ENCODE measurements at regions of chr2 and their contacts with region 1.

Region 1: GRCh38 chr2:144510294-144510991 is 9.5 kb downstream of the ZEB2 start:
- DNase-seq: peak in 1 of 2 donors; percentile 55
- ATAC-seq: peak; percentile 32 to 89 (median 74)
- H3K4me3 ChIP-seq: peak overlapping the region in 9 of 10 donors; percentile 25 to 85 (median 79)
- H3K27ac ChIP-seq: peak overlapping the region; percentile 96 to 100 (median 98)
- H3K4me1 ChIP-seq: peaks cover 0 to 95% (median 73%) of the 10 kb centered on the region in 9 donors
- H3K27me3 ChIP-seq: peaks cover 0 to 3% (median 0%) of the 10 kb centered on the region in 7 donors
- CTCF ChIP-seq: no peak

Region 2: GRCh38 chr2:143779021-143779420 is 731.4 kb before region 1 on chr2:
- intact Hi-C with region 1: no loop called
- DNase-seq: no peak
- ATAC-seq: no peak
- H3K4me3 ChIP-seq: no peak overlapping the region
- H3K27ac ChIP-seq: no peak overlapping the region
- H3K4me1 ChIP-seq: no peaks in the 10 kb centered on the region
- H3K27me3 ChIP-seq: no peaks in the 10 kb centered on the region
- CTCF ChIP-seq: no peak

Region 3: DNA sequence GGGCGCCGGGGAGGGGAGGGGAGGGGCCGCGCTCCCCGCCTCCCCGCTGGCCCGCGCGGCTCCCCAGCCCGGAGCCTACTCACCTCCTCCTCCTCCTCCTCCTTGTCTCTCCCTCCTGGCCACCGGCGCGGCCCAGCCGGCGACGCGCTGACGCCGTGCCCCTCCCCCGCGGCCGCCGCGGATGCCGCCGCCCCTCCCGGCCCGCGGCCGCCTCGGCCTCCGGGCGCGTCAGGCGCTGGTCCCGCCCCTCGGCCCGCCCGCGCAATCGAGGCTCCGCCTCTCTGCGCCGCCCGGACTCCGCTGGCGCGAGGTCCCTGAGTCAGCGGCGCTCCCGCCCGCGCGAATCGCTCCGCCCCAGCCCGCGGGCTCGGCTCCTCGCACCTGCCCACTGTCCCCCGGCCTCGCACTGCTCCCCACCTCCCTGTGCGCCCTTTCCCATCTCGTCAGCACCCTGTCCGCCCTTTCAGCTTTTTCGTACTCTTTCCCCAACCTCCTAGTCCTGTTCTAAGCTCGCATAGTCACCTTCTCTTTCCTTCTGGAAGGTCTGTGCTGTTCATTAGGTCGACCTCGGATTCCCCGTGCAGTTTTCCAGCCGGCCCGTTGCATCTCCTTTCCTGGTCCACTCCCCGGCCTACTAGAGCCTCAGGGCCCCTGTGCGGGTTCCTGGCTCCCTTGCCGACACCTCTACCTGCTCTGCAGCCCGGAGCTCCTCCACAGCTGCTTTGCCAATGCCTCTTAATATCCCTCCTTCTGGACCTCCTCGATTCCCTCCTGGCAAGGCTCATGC is 177.9 kb before region 1 on chr2:
- intact Hi-C with region 1: loop called in 6 of 10 experiments (anchors 5 kb)
- DNase-seq: peak; percentile 80 to 90
- ATAC-seq: peak; percentile 94 to 98 (median 95)
- H3K4me3 ChIP-seq: peak overlapping the region in 9 of 10 donors; percentile 58 to 97 (median 89)
- H3K27ac ChIP-seq: peak overlapping the region; percentile 78 to 96 (median 92)
- H3K4me1 ChIP-seq: peaks cover 0 to 22% (median 16%) of the 10 kb centered on the region in 9 donors
- H3K27me3 ChIP-seq: no peaks in the 10 kb centered on the region
- CTCF ChIP-seq: no peak

Region 4: DNA sequence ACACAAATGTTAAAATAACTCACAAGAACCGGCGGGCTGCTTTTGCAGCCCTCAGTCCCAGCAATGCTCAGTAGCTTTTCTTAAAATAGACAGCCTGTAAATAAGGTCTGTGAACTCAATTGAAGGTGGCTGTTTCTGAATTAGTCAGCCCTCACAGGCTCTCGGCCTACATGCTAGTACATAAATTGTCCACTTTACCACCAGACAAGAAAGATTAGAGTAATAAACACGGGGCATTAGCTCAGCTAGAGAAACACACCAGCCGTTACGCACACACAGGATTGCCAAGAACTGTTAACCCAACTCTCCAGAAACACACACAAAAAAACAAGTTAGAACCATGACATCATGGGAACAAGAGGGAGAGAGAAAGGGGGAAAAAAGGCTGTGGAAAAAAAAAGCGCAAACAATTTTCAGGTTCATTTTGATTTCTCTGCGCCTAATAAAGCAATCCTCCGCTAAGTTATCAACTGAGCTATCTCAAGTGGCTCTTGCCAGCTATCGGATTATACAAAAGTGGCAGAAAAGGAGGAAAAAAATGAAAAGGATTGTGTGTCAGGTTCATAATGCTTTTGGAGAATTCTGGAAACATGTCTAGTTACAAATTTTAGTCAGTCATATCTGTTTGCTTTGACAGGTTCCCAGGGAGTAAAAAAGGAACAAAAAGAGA is 79.6 kb before region 1 on chr2:
- intact Hi-C with region 1: loop called in 1 of 10 experiments (anchors 5 kb)
- DNase-seq: peak in 1 of 2 donors; percentile 35
- ATAC-seq: peak; percentile 66 to 88 (median 84)
- H3K4me3 ChIP-seq: peak overlapping the region in 9 of 10 donors; percentile 5 to 44 (median 32)
- H3K27ac ChIP-seq: peak overlapping the region; percentile 57 to 86 (median 78)
- H3K4me1 ChIP-seq: peaks cover 0 to 94% (median 65%) of the 10 kb centered on the region in 9 donors
- H3K27me3 ChIP-seq: no peaks in the 10 kb centered on the region
- CTCF ChIP-seq: no peak

Region 5: DNA sequence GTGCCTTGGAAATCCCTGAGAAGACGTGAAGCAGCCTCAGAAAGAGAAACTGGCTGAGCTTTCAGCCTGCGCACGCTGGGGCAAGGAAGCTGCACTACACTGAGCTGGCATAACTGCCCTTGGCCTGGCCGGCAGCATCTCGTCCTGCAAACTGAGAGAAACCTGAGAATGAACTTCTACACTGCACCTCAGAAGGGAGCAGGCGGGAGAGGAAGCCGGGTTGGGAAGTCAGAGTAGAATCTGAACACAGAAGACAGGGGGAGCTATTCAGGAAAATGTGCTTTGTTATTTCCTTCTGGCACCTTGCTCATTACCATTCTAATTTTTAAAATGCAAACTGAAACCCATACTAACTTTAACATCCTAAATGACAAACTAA is 61.4 kb before region 1 on chr2:
- intact Hi-C with region 1: loop called in 6 of 10 experiments (anchors 5 to 10 kb)
- DNase-seq: peak in 1 of 2 donors; percentile 21
- ATAC-seq: peak; percentile 30 to 73 (median 52)
- H3K4me3 ChIP-seq: peak overlapping the region in 6 of 10 donors; percentile 5 to 28 (median 19)
- H3K27ac ChIP-seq: peak overlapping the region in 8 of 10 donors; percentile 38 to 75 (median 68)
- H3K4me1 ChIP-seq: peaks cover 4 to 95% (median 49%) of the 10 kb centered on the region in 9 donors
- H3K27me3 ChIP-seq: no peaks in the 10 kb centered on the region
- CTCF ChIP-seq: peak; percentile 13 to 62 (median 46)

Region 6: GRCh38 chr2:144456680-144457079 is 53.8 kb before region 1 on chr2:
- intact Hi-C with region 1: loop called in 8 of 10 experiments (anchors 5 to 10 kb)
- DNase-seq: peak; percentile 15 to 29
- ATAC-seq: peak; percentile 34 to 90 (median 53)
- H3K4me3 ChIP-seq: no peak overlapping the region
- H3K27ac ChIP-seq: peak overlapping the region in 7 of 10 donors; percentile 18 to 77 (median 26)
- H3K4me1 ChIP-seq: peaks cover 4 to 100% (median 99%) of the 10 kb centered on the region in 9 donors
- H3K27me3 ChIP-seq: no peaks in the 10 kb centered on the region
- CTCF ChIP-seq: no peak

Measured in heart right ventricle (tissue), 16 donors.